Testis (tissue), 5 donors: ENCODE measurements at regions of chr2 and their contacts with region 1.

Region 1: DNA sequence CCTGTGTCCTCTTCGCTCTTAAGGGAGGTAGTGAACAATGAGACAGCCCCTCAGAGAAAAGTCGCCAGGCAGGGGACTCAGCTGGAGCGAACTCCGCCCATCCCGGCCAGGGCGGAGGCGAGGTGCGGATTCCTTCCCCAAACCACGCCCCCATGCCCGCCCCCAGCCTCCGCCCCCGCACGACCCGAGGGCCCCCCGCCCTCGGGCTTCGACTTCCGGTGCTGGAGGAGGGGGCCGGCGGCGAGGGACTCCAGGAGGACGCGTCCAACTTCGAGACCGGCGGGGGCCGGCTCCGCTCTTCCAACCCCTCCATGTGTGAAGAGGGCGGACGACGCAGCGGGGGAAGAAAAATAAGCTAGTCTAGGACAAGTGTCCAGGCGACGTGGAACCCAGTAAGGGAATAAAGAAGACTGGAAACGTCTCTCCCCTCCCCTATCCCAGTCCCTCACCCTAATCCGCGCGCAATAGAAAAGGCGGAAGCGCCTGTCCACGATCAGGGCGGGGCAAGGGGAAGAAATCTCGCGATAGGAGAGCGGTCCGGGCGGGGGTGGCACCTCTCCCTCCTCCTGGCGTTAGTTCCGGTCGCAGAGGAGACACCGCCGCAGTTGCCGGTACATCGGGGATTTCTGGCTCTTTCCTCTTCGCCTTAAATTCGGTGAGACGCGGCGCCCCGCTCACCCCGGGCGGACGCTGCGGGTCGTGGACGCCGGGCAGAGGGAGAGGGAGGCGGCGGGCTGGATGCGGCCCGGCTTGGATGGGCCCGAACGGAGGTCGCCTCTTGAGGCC is at the start of gene BZW1:
- DNase-seq: peak; percentile 96
- H3K4me3 ChIP-seq: peak within 1 kb of the TSS; percentile 92 to 95
- H3K27ac ChIP-seq: peak within 1 kb of the TSS; percentile 96 to 97
- H3K4me1 ChIP-seq: peaks cover 18% of the 10 kb centered on the region
- H3K27me3 ChIP-seq: no peaks in the 10 kb centered on the region
- CTCF ChIP-seq: no peak
- POLR2A ChIP-seq: peak; percentile 76
- total RNA-seq, gene BZW1: 238 to 284 TPM

Region 2: GRCh38 chr2:200747668-200748618 is 63.6 kb before region 1 on chr2:
- intact Hi-C with region 1: no loop called
- DNase-seq: peak; percentile 59
- H3K4me3 ChIP-seq: no peak overlapping the region
- H3K27ac ChIP-seq: peak overlapping the region in 1 of 2 donors; percentile 42
- H3K4me1 ChIP-seq: peaks cover 10% of the 10 kb centered on the region
- H3K27me3 ChIP-seq: no peaks in the 10 kb centered on the region
- CTCF ChIP-seq: no peak
- POLR2A ChIP-seq: no peak

Region 3: GRCh38 chr2:200856806-200857205 is 45.3 kb after region 1 on chr2:
- intact Hi-C with region 1: loop called (anchors 5 kb)
- DNase-seq: no peak
- H3K4me3 ChIP-seq: no peak overlapping the region
- H3K27ac ChIP-seq: no peak overlapping the region
- H3K4me1 ChIP-seq: peaks cover 15% of the 10 kb centered on the region
- H3K27me3 ChIP-seq: no peaks in the 10 kb centered on the region
- CTCF ChIP-seq: no peak
- POLR2A ChIP-seq: no peak